ENCODE measurements at regions of chr2 and their contacts with region 1.

Region 1: GRCh38 chr2:161104054-161104553 is 56.1 kb upstream of the TANK start:
- DNase-seq: no peak
- H3K4me3 ChIP-seq: no peak overlapping the region
- H3K4me3 Mint-ChIP-seq: no peak overlapping the region
- H3K27ac Mint-ChIP-seq: peak overlapping the region; percentile 58
- H3K4me1 ChIP-seq: peaks cover 17% of the 10 kb centered on the region
- H3K4me1 Mint-ChIP-seq: peaks cover 12% of the 10 kb centered on the region
- H3K27me3 ChIP-seq: no peaks in the 10 kb centered on the region
- H3K27me3 Mint-ChIP-seq: no peaks in the 10 kb centered on the region
- CTCF ChIP-seq: no peak

Region 2: GRCh38 chr2:160803881-160804280 is 300.2 kb before region 1 on chr2:
- CTCF ChIA-PET with region 1: no interaction called
- POLR2A ChIA-PET with region 1: no interaction called
- intact Hi-C with region 1: no loop called
- DNase-seq: no peak
- H3K4me3 ChIP-seq: no peak overlapping the region
- H3K4me3 Mint-ChIP-seq: no peak overlapping the region
- H3K27ac Mint-ChIP-seq: no peak overlapping the region
- H3K4me1 ChIP-seq: no peaks in the 10 kb centered on the region
- H3K4me1 Mint-ChIP-seq: no peaks in the 10 kb centered on the region
- H3K27me3 ChIP-seq: no peaks in the 10 kb centered on the region
- H3K27me3 Mint-ChIP-seq: no peaks in the 10 kb centered on the region
- CTCF ChIP-seq: no peak

Region 3: DNA sequence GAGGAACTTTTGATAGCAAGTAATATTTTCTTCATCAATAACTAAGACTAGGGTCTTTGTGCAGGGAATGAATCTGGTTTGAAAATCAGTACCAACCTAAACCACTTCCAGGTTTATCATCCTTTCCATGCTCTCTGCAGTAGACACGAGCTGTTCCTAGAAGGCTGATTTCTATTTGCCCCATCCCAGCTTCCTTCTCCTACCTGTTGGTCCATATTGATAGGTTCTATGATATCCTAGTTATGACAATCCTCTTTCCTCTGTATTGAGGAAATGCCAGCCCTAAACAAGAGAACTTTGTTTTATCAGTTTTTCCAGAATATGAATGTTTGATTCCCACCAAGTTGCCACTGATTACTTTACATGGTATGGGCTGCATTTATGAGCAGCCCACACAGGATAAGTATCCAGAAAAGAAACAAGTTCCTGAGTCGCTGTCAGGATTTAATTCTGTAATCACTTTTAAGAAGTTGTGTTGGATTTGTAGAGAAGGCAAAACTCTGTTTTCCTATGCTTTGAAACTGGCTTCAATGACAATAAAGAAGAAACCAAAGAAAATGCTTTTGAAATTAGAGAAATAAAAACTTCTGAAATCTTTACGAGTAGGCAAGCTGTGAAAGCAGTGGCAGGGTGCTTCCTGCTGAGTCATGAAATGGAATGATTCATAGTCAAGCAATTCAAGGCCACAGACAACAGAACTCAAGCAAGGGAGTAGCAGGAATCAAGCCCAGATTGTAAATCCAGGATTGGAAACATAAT is 18.8 kb after region 1 on chr2:
- CTCF ChIA-PET with region 1: no interaction called
- POLR2A ChIA-PET with region 1: no interaction called
- intact Hi-C with region 1: loop called (anchors 2 kb)
- DNase-seq: peak; percentile 52 to 59
- H3K4me3 ChIP-seq: no peak overlapping the region
- H3K4me3 Mint-ChIP-seq: peak overlapping the region; percentile 68
- H3K27ac Mint-ChIP-seq: peak overlapping the region; percentile 95
- H3K4me1 ChIP-seq: peaks cover 37% of the 10 kb centered on the region
- H3K4me1 Mint-ChIP-seq: peaks cover 22% of the 10 kb centered on the region
- H3K27me3 ChIP-seq: no peaks in the 10 kb centered on the region
- H3K27me3 Mint-ChIP-seq: no peaks in the 10 kb centered on the region
- CTCF ChIP-seq: no peak

Region 4: GRCh38 chr2:161172901-161173540 is 68.9 kb after region 1 on chr2:
- CTCF ChIA-PET with region 1: no interaction called
- POLR2A ChIA-PET with region 1: no interaction called
- intact Hi-C with region 1: no loop called
- DNase-seq: no peak
- H3K4me3 ChIP-seq: no peak overlapping the region
- H3K4me3 Mint-ChIP-seq: no peak overlapping the region
- H3K27ac Mint-ChIP-seq: no peak overlapping the region
- H3K4me1 ChIP-seq: no peaks in the 10 kb centered on the region
- H3K4me1 Mint-ChIP-seq: peaks cover 8% of the 10 kb centered on the region
- H3K27me3 ChIP-seq: no peaks in the 10 kb centered on the region
- H3K27me3 Mint-ChIP-seq: no peaks in the 10 kb centered on the region
- CTCF ChIP-seq: no peak

Region 5: DNA sequence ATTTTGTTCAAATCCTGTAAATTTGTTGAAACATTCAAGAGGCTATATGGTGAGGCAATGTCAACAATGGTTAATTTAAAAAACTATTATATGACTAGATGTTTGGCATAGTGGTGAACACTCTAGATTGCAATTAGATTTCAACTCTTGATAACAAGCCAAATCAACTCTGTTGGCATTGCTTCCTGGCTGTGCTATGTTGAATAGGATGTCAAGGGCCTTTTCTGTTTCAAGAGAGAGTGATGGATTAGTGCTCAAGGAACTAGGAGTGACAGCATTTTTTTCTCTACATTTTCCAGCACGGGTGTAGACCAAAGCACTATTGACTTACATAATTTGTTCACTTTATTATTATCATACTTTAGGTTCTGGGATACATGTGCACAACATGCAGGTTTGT is 1906.9 kb after region 1 on chr2:
- CTCF ChIA-PET with region 1: no interaction called
- POLR2A ChIA-PET with region 1: no interaction called
- intact Hi-C with region 1: no loop called
- DNase-seq: no peak
- H3K4me3 ChIP-seq: no peak overlapping the region
- H3K4me3 Mint-ChIP-seq: no peak overlapping the region
- H3K27ac Mint-ChIP-seq: no peak overlapping the region
- H3K4me1 ChIP-seq: no peaks in the 10 kb centered on the region
- H3K4me1 Mint-ChIP-seq: no peaks in the 10 kb centered on the region
- H3K27me3 ChIP-seq: no peaks in the 10 kb centered on the region
- H3K27me3 Mint-ChIP-seq: no peaks in the 10 kb centered on the region
- CTCF ChIP-seq: no peak

Measured in Caco-2 (cell line).